Calu3 (cell line): ENCODE measurements at regions of chr1 and their contacts with region 1.

Region 1: GRCh38 chr1:85259118-85259911 is at the start of gene C1orf52:
- DNase-seq: peak; percentile 98
- H3K4me3 Mint-ChIP-seq: peak within 1 kb of the TSS; percentile 98
- H3K27ac Mint-ChIP-seq: peak within 1 kb of the TSS; percentile 66
- H3K4me1 Mint-ChIP-seq: peaks cover 31% of the 10 kb centered on the region
- H3K27me3 Mint-ChIP-seq: no peaks in the 10 kb centered on the region
- CTCF ChIP-seq: peak; percentile 95
- total RNA-seq, gene C1orf52: 29.7 TPM in 2 replicates

Region 2: DNA sequence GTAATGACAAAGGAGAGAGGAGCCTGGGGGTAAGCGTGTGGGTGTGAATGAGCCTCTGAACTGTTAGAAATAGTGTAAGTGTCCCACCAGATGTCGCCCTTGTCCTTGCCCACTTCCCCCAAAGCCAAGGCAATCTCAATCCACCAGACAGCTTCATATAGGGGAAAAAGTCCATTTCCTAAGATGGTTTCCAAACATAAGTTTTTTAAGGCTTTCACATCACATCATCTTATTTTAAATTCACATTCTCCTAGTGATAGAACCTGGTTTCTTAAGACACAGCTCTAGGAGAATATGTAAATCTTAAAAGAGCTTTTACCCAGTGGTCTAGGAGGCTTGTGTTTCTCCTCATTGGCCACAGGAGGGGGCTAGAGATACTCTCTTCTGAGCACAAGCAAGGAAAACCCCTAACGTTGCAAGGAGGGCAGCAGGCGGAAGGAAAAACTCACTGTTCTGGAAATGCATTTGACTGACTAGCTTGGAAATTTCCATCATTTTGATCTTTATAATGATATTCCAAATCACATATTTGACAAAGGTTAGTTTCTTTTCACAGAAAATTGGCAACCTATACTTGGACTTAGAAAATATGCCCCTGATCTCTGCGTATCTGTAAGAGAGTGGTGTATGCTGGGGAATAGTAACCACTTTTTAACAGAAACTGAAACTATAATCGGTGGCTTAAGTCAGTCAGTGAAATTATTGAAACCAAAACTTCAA is 314.4 kb before region 1 on chr1:
- CTCF ChIA-PET with region 1: interaction called, 31 read pairs
- intact Hi-C with region 1: loop called (anchors 1 kb)
- DNase-seq: peak; percentile 86
- H3K4me3 Mint-ChIP-seq: peak overlapping the region; percentile 56
- H3K27ac Mint-ChIP-seq: peak overlapping the region; percentile 70
- H3K4me1 Mint-ChIP-seq: no peaks in the 10 kb centered on the region
- H3K27me3 Mint-ChIP-seq: no peaks in the 10 kb centered on the region
- CTCF ChIP-seq: peak; percentile 81

Region 3: DNA sequence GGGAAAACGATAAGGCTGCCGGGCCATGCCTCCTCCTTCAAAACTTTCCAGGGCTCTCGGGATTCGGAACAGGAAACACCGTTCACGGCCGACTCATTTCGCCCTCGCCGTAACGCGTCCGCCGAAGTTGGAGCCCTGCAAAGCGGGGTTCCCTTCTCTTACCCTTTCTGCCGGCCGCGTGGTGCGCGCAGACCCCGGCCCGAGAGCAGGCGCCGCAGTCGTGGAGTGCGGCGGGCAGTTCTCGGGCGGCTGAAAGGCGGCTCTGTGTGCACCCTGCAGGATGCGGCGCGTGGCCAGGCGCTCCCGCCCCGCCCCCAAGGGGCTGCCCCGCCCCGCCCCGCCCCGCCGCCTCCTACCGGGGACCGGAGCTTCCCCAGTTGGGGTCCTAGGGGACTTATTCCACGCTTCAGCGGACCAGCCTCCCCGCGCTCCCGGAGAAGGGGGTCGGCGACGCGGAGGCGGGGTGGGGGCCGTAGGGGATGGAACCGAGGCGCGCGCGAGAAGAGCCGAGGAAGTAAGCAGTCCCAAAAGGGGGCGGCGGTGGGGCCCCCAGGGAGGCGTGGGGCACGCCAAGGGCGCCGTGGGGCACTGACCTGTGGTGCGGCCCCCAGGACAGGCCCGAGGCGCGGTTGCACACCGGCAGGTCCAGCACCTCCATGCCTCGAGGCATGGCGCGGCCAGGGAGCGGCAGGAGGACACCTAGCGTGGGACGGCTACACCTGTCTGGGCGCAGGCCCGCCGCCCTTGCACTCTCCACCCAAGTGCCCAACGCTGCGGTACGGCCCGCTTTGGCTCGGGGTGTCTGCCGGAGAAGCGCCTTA is 262.3 kb before region 1 on chr1 and contains the start of gene MCOLN2:
- CTCF ChIA-PET with region 1: no interaction called
- intact Hi-C with region 1: loop called (anchors 1 kb)
- DNase-seq: peak; percentile 66
- H3K4me3 Mint-ChIP-seq: peak within 1 kb of the TSS; percentile 96
- H3K27ac Mint-ChIP-seq: peak within 1 kb of the TSS; percentile 54
- H3K4me1 Mint-ChIP-seq: peaks cover 18% of the 10 kb centered on the region
- H3K27me3 Mint-ChIP-seq: peaks cover 13% of the 10 kb centered on the region
- CTCF ChIP-seq: no peak
- total RNA-seq, gene MCOLN2: 12.2 and 12.6 TPM in 2 replicates

Region 4: GRCh38 chr1:85109475-85109874 is 149.8 kb before region 1 on chr1:
- CTCF ChIA-PET with region 1: interaction called, 31 read pairs
- intact Hi-C with region 1: loop called (anchors 1 kb)
- DNase-seq: peak; percentile 58
- H3K4me3 Mint-ChIP-seq: no peak overlapping the region
- H3K27ac Mint-ChIP-seq: no peak overlapping the region
- H3K4me1 Mint-ChIP-seq: no peaks in the 10 kb centered on the region
- H3K27me3 Mint-ChIP-seq: no peaks in the 10 kb centered on the region
- CTCF ChIP-seq: peak; percentile 86

Region 5: DNA sequence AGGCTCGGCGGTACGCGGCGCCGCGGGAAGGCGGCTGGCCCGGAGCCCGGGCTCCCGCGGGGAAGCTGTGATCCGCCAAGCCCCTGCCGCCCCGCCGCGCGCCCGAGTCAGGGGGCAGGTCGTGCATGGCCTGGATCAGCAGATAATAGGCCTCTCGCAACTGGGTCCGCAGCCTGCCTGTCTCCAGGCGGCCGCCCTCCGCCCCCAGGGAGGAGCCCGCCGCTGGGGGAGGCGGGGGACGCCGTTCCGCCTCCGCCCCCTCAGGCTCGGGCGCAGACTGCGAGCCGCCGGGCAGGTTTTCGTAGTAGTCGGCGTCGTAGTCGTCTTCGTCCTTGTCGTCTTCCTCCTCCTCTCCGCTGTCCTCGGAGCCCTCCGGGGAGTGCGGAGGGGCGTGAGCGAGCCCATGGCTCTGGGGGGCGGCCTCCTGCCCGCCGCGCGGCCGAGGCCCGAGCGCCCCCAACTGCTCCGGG is 58.4 kb before region 1 on chr1 and contains the start of gene SYDE2:
- CTCF ChIA-PET with region 1: no interaction called
- intact Hi-C with region 1: loop called (anchors 2 kb)
- DNase-seq: peak; percentile 86
- H3K4me3 Mint-ChIP-seq: peak within 1 kb of the TSS; percentile 94
- H3K27ac Mint-ChIP-seq: peak within 1 kb of the TSS; percentile 94
- H3K4me1 Mint-ChIP-seq: peaks cover 9% of the 10 kb centered on the region
- H3K27me3 Mint-ChIP-seq: no peaks in the 10 kb centered on the region
- CTCF ChIP-seq: no peak
- total RNA-seq, gene SYDE2: 8.3 and 10.4 TPM in 2 replicates

Region 6: DNA sequence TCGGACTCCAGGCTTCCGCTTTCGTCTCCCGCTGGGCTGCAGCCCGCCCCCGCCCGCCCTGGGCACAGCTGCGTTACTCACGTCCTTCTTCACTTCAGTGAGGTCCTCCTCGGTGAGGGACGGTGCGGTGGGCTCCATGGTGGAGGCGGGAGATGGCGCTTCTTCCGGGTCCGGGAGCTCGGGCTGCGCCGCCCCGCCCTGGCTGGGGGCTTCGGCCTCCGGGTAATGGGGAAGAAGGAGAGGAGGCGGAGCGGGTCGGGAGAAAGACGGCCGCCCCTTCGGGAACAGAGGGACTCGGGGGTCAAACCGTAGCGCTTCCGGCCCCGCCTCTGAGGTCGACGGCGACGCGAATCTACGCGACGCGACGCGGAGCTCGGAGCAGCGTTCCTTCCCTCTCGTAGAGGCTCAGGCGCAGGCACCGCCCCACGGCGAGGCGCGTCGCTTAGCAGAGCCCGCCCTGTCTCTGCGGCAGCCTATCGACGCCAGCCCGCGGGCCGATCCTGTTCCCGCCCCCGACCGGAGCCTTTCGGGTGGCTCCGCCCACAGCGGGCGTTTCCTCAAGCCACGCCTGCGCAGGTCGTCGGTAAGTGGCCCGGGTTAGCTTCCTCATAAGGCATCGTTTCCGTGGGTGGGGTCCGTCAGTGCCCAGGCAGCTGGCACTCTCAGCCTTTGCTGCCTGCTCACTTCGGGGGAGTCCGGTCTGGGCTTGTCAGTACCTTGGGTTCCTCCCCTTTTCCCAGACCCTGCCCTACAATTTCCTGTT is 17.1 kb after region 1 on chr1 and contains the start of gene BCL10:
- CTCF ChIA-PET with region 1: interaction called, 11 read pairs
- intact Hi-C with region 1: no loop called
- DNase-seq: peak; percentile 98
- H3K4me3 Mint-ChIP-seq: peak within 1 kb of the TSS; percentile 86
- H3K27ac Mint-ChIP-seq: peak within 1 kb of the TSS; percentile 10
- H3K4me1 Mint-ChIP-seq: peaks cover 52% of the 10 kb centered on the region
- H3K27me3 Mint-ChIP-seq: no peaks in the 10 kb centered on the region
- CTCF ChIP-seq: no peak
- total RNA-seq, gene BCL10: 57.7 and 59.1 TPM in 2 replicates